ENCODE measurements at regions of chr5 and their contacts with region 1.

Region 1: GRCh38 chr5:138223532-138223931 is 10.4 kb upstream of the CDC23 start:
- DNase-seq: no peak
- ATAC-seq: no peak

Region 2: DNA sequence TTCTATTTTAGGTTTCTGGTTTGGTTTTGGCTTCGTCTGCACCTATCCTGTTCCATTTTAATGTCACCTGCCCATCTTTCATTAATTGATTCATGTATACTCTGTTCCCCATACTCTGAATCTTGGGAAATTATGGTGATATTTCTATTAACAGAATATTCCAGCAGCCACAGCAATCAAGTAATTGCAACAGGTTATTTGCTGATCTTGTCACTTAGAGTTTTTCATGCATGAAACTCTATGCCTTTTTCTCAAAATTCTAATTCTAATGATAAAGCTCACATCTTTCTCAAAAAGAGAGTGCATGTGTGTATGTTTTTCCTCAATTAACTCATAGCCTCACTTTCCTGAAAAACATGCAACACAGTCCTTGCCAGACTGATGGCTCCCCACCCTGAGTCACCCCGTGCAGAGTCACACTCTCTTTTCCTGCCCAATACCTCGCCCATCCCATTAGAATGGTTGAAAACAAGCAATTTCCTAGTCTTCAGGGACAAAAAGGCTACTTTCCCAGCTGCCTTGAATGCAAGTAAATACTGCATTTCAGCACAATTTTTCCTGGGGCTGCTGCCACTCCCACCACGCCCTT is 35.3 kb after region 1 on chr5:
- intact Hi-C with region 1: no loop called
- DNase-seq: no peak
- ATAC-seq: no peak

Region 3: GRCh38 chr5:138282920-138283742 is 59.6 kb after region 1 on chr5:
- intact Hi-C with region 1: loop called (anchors 5 kb)
- DNase-seq: no peak
- ATAC-seq: peak; percentile 91